Activated naive CD4-positive, alpha-beta T cell treated with anti-CD3 and anti-CD28 coated beads for 36 hours (primary cell): ENCODE measurements at regions of chr1 and their contacts with region 1.

Region 1: GRCh38 chr1:8878448-8879347 is at the start of gene ENO1:
- DNase-seq: peak; percentile 99
- H3K4me3 Mint-ChIP-seq: peak within 1 kb of the TSS; percentile 97
- H3K27ac Mint-ChIP-seq: peak within 1 kb of the TSS; percentile 99
- H3K4me1 Mint-ChIP-seq: peaks cover 29% of the 10 kb centered on the region
- H3K27me3 Mint-ChIP-seq: no peaks in the 10 kb centered on the region
- total RNA-seq, gene ENO1: 2,952 to 3,004 TPM

Region 2: DNA sequence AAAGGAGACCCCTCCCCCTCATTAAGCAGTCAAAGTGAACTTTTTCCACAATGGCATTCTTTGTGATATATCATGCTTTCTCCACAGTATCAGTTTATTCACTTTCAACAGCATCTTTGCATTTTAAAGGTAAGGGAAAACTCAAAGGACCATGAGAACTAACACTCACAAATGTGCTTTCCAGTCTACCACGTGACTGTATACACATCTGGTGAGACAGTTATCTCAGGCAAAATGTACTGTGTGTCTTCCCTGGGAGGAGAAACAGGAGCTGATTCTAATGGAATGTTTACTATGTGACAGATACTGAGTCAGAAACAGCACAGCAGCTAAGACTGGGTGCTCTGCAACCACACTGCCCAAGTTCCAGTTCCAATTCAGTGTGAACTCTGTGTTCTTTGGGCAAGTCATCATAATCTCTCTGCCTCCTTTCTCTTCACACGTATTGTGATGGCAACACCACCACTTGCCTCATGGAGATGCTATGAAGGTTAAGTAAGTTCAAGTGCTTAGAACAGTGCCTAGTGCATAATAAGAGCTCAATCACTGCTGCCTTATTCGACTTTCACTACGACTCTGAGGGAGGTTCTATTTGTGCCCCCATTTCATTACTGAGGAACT is 481.8 kb before region 1 on chr1:
- CTCF ChIA-PET with region 1: no interaction called
- intact Hi-C with region 1: loop called (anchors 10 kb)
- DNase-seq: peak; percentile 71
- H3K4me3 Mint-ChIP-seq: peak overlapping the region; percentile 10
- H3K27ac Mint-ChIP-seq: peak overlapping the region; percentile 83
- H3K4me1 Mint-ChIP-seq: peaks cover 71% of the 10 kb centered on the region
- H3K27me3 Mint-ChIP-seq: no peaks in the 10 kb centered on the region

Region 3: GRCh38 chr1:8858888-8859706 is 19.6 kb before region 1 on chr1:
- CTCF ChIA-PET with region 1: interaction called, 10 read pairs
- intact Hi-C with region 1: loop called (anchors 2 kb)
- DNase-seq: peak; percentile 78
- H3K4me3 Mint-ChIP-seq: no peak overlapping the region
- H3K27ac Mint-ChIP-seq: peak overlapping the region; percentile 83
- H3K4me1 Mint-ChIP-seq: peaks cover 25% of the 10 kb centered on the region
- H3K27me3 Mint-ChIP-seq: no peaks in the 10 kb centered on the region

Region 4: DNA sequence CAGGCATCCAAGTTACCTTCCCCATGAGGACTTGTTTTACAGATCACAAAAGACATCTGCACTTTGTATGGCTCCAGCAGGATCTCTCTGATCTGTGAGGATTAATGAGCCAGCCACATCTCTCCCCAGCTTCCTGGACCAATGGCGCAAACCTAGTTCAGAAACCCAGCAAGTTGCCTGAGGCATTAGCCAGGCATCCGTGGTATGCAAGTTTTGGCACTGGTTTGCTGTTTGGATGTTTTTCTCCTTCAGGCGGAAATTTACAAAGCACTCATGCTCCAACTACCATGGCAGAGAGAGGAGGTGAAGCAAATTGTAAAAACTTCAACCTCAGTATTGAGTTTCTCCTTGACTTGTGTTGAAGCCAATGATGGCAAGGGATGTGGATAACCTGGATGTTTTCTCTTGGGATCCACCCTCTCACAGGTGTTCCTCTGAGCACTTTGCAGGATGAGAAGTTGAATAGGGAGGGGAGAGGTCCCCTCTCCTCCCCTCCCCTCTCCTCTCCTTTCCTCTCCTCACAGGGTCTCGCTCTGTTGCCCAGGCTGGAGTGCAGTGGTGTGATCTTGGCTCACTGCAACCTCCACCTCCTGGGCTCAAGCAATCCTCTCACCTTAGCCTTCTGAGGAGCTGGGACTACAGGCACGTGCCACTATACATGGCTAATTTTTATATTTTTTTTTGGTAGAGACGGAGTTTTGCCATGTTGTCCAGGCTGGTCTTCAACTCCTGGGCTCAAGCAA is 25.4 kb after region 1 on chr1:
- CTCF ChIA-PET with region 1: interaction called, 3 read pairs
- intact Hi-C with region 1: loop called (anchors 1 kb)
- DNase-seq: no peak
- H3K4me3 Mint-ChIP-seq: no peak overlapping the region
- H3K27ac Mint-ChIP-seq: no peak overlapping the region
- H3K4me1 Mint-ChIP-seq: peaks cover 48% of the 10 kb centered on the region
- H3K27me3 Mint-ChIP-seq: no peaks in the 10 kb centered on the region

Region 5: DNA sequence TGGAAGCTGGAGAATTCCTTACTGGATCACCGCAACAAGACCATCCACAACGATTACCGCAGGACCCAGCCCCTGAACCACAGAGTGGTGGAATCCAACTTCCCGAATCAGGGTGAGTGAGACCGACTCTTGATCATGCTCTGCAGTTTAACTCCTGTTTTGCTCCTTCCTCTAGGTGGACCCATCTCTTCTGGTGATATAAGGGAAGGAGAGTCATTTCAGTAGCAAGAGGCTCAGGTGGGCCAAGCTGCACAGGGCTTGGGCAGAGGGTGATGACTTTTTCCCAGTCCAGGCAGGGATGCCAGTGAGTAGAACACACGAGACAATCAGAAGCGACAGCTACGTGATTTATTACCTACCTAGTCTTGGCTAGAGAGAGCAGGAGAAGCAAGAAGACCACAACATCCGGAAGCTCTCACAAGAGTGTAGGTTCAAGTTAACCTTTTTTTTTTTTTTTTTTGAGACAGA is 92.2 kb after region 1 on chr1:
- CTCF ChIA-PET with region 1: interaction called, 3 read pairs
- intact Hi-C with region 1: loop called (anchors 2 kb)
- DNase-seq: peak; percentile 81
- H3K4me3 Mint-ChIP-seq: peak overlapping the region; percentile 96
- H3K27ac Mint-ChIP-seq: peak overlapping the region; percentile 94
- H3K4me1 Mint-ChIP-seq: peaks cover 35% of the 10 kb centered on the region
- H3K27me3 Mint-ChIP-seq: no peaks in the 10 kb centered on the region

Region 6: GRCh38 chr1:9145021-9145668 is 266.4 kb after region 1 on chr1:
- CTCF ChIA-PET with region 1: no interaction called
- intact Hi-C with region 1: no loop called
- DNase-seq: no peak
- H3K4me3 Mint-ChIP-seq: no peak overlapping the region
- H3K27ac Mint-ChIP-seq: no peak overlapping the region
- H3K4me1 Mint-ChIP-seq: no peaks in the 10 kb centered on the region
- H3K27me3 Mint-ChIP-seq: no peaks in the 10 kb centered on the region

Region 7: GRCh38 chr1:9651565-9652378 is 773.1 kb after region 1 on chr1 and contains the start of gene PIK3CD:
- CTCF ChIA-PET with region 1: no interaction called
- intact Hi-C with region 1: loop called (anchors 10 kb)
- DNase-seq: peak; percentile 63
- H3K4me3 Mint-ChIP-seq: peak within 1 kb of the TSS; percentile 99
- H3K27ac Mint-ChIP-seq: peak within 1 kb of the TSS; percentile 100
- H3K4me1 Mint-ChIP-seq: peaks cover 46% of the 10 kb centered on the region
- H3K27me3 Mint-ChIP-seq: no peaks in the 10 kb centered on the region
- total RNA-seq, gene PIK3CD: 96.6 to 101 TPM